ENCODE measurements at regions of chr17 and their contacts with region 1.

Region 1: DNA sequence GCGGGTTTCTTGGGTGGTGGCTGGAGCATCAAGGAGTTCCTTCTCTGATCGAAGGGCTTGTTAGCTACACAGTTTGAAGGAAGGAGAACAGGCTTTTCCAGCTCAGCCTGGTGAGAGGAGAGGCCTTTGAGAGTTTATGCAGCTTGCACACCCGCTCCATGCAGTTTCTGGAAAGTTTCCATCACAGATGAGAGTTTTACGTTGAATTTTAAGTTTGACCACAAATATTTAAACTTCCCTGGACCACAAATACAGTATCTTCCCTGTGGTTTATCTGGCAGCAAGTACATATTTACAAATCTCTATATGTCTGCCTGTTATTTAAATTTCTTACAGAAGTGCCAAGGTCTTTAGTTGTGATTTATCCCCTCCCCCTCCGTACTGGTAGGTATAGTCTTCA is 56.8 kb downstream of the HIC1 start:
- DNase-seq: no peak
- ATAC-seq: no peak
- H3K4me3 ChIP-seq: no peak overlapping the region
- H3K27ac ChIP-seq: no peak overlapping the region
- H3K4me1 ChIP-seq: peaks cover 0 to 19% (median 12%) of the 10 kb centered on the region in 12 donors
- H3K27me3 ChIP-seq: no peaks in the 10 kb centered on the region
- CTCF ChIP-seq: no peak
- POLR2A ChIP-seq: no peak

Region 2: DNA sequence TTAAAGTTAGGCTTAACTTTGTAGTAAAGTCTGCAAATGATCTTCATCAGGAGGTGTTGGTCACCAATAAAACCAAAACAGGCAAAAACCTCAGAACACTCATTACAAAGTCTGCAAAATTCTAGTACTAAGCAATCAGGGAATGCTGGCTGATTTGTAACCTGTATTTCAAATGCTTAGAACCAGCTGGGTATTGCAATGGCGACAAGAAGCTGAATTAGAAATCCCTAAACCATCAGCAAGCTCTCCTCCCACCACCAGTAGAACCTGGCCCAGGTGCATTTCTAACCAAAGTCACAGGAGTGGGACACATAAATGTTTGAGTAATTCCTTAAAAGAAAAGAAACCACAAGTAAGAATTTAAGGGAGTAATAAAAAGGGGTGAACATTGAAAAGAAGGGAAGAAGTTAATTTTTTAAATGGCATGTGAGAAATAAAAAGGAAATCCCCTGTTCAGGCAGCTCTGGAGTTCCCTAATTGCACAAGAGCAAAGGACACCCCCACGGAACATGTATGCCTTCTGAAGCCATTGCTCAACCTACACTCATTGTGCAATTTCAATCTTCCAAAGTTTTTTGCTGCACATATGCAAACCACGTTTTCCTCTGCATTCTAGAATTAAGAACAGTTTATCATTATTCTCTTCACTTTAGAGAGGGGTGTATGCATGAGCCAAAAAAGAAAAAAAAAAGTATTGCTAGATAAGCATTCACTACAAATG is 46.1 kb after region 1 on chr17:
- intact Hi-C with region 1: loop called in 1 of 10 experiments (anchors 5 kb)
- DNase-seq: peak in 1 of 5 donors; percentile 39
- ATAC-seq: peak in 3 of 4 donors; percentile 64 to 76 (median 73)
- H3K4me3 ChIP-seq: no peak overlapping the region
- H3K27ac ChIP-seq: peak overlapping the region in 7 of 12 donors; percentile 10 to 67 (median 27)
- H3K4me1 ChIP-seq: peaks cover 0 to 40% (median 2%) of the 10 kb centered on the region in 12 donors
- H3K27me3 ChIP-seq: no peaks in the 10 kb centered on the region
- CTCF ChIP-seq: no peak
- POLR2A ChIP-seq: no peak

Region 3: DNA sequence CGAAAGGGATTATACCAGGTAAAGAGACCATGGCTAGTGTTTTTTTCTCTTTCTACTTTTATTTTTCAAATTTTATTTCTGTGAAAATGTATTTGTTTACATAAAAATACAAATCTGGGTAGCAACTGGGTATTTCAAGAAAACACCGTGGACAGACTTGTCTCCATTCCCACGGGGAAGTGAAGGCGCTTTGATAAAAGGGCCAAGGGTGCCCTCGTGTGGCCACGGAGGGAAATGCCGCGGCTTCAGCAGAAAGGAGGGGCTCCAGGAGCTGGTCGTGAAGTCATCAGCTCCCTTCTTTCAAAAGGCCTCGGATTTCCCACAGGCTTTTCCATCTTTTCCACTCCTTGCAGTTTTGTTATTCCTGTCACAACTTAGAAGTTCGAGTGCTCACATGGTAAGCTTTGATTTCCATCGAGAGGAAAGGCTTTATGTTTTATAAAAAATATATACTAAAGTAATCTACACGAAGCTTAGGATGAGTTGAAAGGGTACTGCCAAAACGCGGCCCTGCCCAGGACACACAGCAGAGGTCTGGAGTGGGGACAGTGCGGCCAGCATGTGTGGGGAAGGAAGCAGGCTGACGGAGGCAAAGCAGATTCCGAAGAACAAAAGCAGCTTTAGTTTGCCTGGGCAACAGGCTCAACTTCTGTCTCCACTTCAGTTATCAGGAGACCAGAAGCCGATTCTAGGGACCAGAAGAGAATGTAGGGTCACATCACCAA is 304.5 kb after region 1 on chr17:
- intact Hi-C with region 1: no loop called
- DNase-seq: peak; percentile 85 to 92 (median 87)
- ATAC-seq: peak; percentile 49 to 77 (median 76)
- H3K4me3 ChIP-seq: no peak overlapping the region
- H3K27ac ChIP-seq: peak overlapping the region in 3 of 12 donors; percentile 13 to 63 (median 15)
- H3K4me1 ChIP-seq: peaks cover 0 to 40% (median 16%) of the 10 kb centered on the region in 12 donors
- H3K27me3 ChIP-seq: no peaks in the 10 kb centered on the region
- CTCF ChIP-seq: peak; percentile 94 to 100 (median 98)
- POLR2A ChIP-seq: no peak